ENCODE measurements at regions of chr4 and their contacts with region 1.

Region 1: GRCh38 chr4:121192480-121192879 is 28.4 kb upstream of the TNIP3 start:
- DNase-seq: peak; percentile 31
- H3K4me3 ChIP-seq: no peak overlapping the region
- H3K27ac ChIP-seq: no peak overlapping the region
- H3K4me1 ChIP-seq: no peaks in the 10 kb centered on the region
- H3K27me3 ChIP-seq: peaks cover 7 to 23% of the 10 kb centered on the region in 2 experiments
- CTCF ChIP-seq: peak; percentile 50 to 56
- POLR2A ChIP-seq: no peak

Region 2: DNA sequence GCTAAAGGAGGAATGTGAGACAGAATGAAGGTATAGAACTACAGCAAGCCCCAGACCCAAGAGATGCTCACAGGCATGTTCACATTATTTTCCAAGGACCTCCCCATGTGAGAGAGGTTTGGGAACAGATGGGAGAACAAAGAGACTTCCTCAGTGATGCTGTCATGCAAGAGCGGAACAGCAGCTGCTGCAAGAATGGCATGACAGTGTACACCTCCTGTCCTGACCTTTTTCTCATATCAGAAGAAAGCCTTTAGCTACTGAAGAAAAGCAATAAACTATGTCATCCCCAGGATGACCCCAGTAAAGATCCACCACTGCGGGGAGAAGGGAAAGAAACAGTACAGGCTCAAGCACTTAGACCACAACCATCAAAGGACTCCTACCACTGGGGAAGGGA is 277.1 kb before region 1 on chr4:
- CTCF ChIA-PET with region 1: no interaction called
- POLR2A ChIA-PET with region 1: no interaction called
- dilution Hi-C with region 1: no loop called
- intact Hi-C with region 1: no loop called
- DNase-seq: no peak
- H3K4me3 ChIP-seq: no peak overlapping the region
- H3K27ac ChIP-seq: no peak overlapping the region
- H3K4me1 ChIP-seq: no peaks in the 10 kb centered on the region
- H3K27me3 ChIP-seq: no peaks in the 10 kb centered on the region
- CTCF ChIP-seq: no peak
- POLR2A ChIP-seq: no peak

Region 3: DNA sequence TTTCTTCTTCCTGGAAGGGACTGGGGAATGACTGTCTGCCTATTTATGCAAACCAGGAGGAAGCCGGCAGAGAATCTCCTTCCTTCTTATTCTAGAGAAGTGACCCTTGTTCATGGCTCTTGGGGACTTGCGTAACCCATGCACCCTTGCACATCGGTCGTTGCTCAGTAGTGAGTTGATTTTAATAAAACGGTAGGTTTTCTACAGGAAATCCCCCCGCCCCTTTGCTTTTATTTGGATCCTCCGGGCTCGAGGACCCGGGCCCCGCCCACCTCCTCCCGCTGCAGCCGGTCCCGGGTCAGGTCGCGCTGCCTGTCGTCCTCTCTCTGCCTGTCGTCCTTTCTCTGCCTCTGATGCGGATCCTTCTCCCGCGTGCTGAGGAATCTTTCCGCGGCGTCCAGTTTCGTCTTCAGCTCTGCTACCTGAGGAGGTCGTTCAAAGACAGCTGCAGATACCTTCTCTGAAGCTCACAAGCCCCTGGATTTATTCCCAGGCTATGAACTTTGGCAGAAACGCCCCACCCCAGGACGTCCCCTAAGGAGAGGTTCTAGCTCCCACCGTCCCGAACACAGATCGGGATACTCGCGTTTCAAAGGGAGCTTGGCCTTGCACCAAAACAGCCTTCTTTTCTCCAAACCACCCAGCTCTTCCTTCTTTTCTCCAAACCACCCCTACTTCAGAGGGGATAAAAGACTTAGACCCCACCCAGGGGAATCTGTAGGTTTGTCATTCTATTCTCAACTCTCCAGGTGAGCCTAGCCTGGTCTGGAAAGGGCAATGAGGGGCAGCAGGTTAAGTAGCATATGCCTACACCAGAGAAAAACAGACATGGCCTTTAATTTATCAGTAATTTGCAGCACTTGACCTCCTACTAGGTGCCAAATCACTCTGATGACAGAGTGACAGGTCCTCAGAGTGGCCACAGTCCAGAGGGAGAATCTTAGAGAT is 35.4 kb before region 1 on chr4:
- CTCF ChIA-PET with region 1: interaction called, 17 read pairs
- POLR2A ChIA-PET with region 1: no interaction called
- dilution Hi-C with region 1: no loop called
- intact Hi-C with region 1: no loop called
- DNase-seq: peak; percentile 24
- H3K4me3 ChIP-seq: peak overlapping the region; percentile 45 to 92 (median 80)
- H3K27ac ChIP-seq: peak overlapping the region; percentile 75
- H3K4me1 ChIP-seq: peaks cover 20% of the 10 kb centered on the region
- H3K27me3 ChIP-seq: no peaks in the 10 kb centered on the region
- CTCF ChIP-seq: no peak
- POLR2A ChIP-seq: no peak

Region 4: DNA sequence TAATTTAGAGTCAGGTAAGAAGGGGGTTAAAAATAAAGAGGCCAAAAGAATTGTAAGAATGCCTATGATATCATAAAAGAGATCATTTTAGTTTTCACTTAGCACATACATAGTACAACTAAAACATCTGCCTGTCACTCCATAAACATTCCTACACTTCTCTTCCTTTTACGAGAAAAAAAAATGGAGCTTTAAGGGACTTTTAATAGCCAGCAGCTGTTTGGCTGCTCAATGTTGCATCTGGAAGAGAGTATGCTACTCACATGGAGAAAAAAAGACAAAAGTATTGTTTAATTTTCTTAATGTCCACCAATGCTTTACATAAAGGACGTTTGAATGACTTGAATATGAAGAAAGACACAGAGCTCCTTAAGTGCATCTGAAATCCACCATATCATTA is 20.3 kb after region 1 on chr4:
- CTCF ChIA-PET with region 1: interaction called, 16 read pairs
- POLR2A ChIA-PET with region 1: no interaction called
- dilution Hi-C with region 1: no loop called
- intact Hi-C with region 1: no loop called
- DNase-seq: no peak
- H3K4me3 ChIP-seq: no peak overlapping the region
- H3K27ac ChIP-seq: no peak overlapping the region
- H3K4me1 ChIP-seq: no peaks in the 10 kb centered on the region
- H3K27me3 ChIP-seq: peaks cover 0 to 3% of the 10 kb centered on the region in 2 experiments
- CTCF ChIP-seq: no peak
- POLR2A ChIP-seq: no peak

Region 5: DNA sequence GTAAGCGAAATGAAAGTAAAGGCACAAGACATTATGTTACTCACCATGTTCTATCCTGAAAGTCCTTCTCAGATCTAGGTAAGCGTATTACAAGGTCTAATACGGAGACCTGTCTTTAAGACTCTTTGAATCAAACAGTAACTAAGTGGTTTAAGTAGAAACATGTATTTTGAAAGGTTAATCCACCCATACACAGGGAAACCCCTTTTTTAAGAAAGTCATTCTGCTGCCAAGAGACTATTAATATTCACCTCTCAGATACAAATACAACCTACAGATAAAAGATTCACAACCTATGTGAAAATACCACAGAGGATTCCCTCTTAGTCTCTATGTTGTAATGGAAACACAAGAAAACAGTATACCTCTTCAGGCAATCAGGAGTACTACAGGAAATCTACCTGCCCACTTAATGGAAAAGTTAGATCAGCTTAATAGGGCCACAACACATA is 34.9 kb after region 1 on chr4:
- CTCF ChIA-PET with region 1: interaction called, 12 read pairs
- POLR2A ChIA-PET with region 1: no interaction called
- dilution Hi-C with region 1: no loop called
- intact Hi-C with region 1: no loop called
- DNase-seq: no peak
- H3K4me3 ChIP-seq: no peak overlapping the region
- H3K27ac ChIP-seq: no peak overlapping the region
- H3K4me1 ChIP-seq: no peaks in the 10 kb centered on the region
- H3K27me3 ChIP-seq: peaks cover 0 to 2% of the 10 kb centered on the region in 2 experiments
- CTCF ChIP-seq: no peak
- POLR2A ChIP-seq: no peak

Region 6: DNA sequence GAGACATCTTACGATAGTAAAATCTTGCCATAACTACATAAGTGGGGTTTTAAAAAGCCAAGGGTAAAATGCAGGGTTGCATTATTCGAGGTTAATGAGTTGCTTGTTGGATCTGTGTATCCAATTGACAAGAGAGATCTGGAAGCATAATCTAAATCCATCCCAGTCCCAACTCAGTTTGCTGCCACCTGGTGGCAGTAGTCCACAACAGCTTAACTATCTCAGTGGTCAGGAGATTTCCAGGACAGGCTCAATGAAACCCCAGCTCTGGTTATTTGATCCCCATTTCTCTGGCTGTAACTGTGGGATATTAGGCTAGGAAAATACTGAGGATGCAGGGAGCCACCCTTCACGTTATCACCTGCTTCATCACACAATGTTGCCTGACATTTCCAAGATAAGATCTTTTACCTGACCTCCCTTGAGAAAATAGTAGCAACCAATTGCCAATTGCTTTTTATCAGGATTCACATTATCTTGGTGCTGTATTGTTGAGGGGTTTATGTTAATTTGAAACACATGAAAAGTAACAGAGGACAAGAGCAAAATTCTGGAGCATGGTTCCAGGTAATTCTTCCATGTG is 59.8 kb after region 1 on chr4:
- CTCF ChIA-PET with region 1: interaction called, 54 read pairs
- POLR2A ChIA-PET with region 1: no interaction called
- dilution Hi-C with region 1: no loop called
- intact Hi-C with region 1: loop called (anchors 1 kb)
- DNase-seq: peak; percentile 65
- H3K4me3 ChIP-seq: no peak overlapping the region
- H3K27ac ChIP-seq: no peak overlapping the region
- H3K4me1 ChIP-seq: peaks cover 2% of the 10 kb centered on the region
- H3K27me3 ChIP-seq: peaks cover 0 to 3% of the 10 kb centered on the region in 2 experiments
- CTCF ChIP-seq: peak; percentile 75 to 81
- POLR2A ChIP-seq: no peak

Region 7: GRCh38 chr4:121307445-121308327 is 115.2 kb after region 1 on chr4:
- CTCF ChIA-PET with region 1: interaction called, 21 read pairs
- POLR2A ChIA-PET with region 1: no interaction called
- dilution Hi-C with region 1: no loop called
- intact Hi-C with region 1: loop called (anchors 1 kb)
- DNase-seq: peak; percentile 24
- H3K4me3 ChIP-seq: no peak overlapping the region
- H3K27ac ChIP-seq: no peak overlapping the region
- H3K4me1 ChIP-seq: no peaks in the 10 kb centered on the region
- H3K27me3 ChIP-seq: no peaks in the 10 kb centered on the region
- CTCF ChIP-seq: peak; percentile 38 to 39
- POLR2A ChIP-seq: no peak

Region 8: GRCh38 chr4:121736735-121737351 is 544.4 kb after region 1 on chr4:
- CTCF ChIA-PET with region 1: interaction called, 13 read pairs
- POLR2A ChIA-PET with region 1: no interaction called
- dilution Hi-C with region 1: no loop called
- intact Hi-C with region 1: loop called (anchors 5 kb)
- DNase-seq: peak; percentile 52
- H3K4me3 ChIP-seq: no peak overlapping the region
- H3K27ac ChIP-seq: no peak overlapping the region
- H3K4me1 ChIP-seq: no peaks in the 10 kb centered on the region
- H3K27me3 ChIP-seq: no peaks in the 10 kb centered on the region
- CTCF ChIP-seq: peak; percentile 40 to 61
- POLR2A ChIP-seq: no peak